GM18951 (cell line): ENCODE measurements at regions of chr2 and their contacts with region 1.

Region 1: DNA sequence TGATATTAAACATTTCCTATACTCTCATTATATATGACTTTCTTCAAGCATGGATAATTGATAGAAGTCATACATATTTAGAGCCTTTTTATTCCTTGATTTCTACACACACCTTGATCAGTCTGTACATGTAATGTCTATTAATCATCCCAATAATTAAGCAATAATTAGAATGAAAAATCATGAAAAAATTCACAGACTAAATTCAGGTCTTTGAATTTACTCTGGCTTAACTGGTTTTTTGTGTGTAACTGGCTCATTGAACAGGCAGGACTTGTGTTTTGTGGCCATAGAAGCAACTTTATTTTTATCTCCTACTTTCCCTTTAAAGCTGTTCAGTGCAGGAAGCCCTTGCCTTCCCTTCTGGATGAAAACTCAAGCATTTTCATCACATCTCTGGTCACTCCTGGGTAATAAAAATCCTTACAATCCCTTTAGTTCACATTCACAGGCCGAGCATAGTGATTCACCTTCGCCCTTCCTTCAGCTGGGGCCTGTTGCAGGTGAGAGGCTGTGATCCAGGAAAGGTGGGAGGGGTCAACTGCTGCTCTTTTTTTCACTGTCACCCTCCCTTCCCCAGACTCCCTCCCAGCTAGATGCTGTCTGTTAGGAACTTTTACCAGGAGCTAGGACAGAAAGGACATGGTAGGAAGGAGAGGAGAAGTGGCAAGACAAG is 58.0 kb upstream of the ITSN2 start:
- POLR2A ChIP-seq: no peak

Region 2: DNA sequence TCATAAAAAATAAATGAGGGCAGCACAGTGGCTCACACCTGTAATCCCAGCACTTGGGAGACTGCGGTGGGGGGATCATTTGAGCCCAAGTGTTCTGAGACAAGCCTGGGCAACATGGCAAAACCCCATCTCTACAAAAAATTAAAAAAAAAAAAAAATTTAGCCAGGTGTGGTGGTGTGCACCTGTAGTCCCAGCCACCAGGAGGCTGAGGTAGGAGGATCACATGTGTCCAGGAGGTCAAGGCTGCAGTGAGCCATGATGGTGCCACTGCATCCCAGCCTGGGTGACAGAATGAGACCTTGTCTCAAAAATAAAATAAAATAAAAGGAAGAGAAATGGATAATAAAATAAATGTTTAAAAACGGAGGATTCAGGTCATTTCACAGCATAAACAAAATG is 604.9 kb before region 1 on chr2:
- in situ Hi-C with region 1: no loop called
- POLR2A ChIP-seq: no peak

Region 3: GRCh38 chr2:24824966-24825882 is 406.9 kb after region 1 on chr2:
- in situ Hi-C with region 1: loop called (anchors 5 kb)
- POLR2A ChIP-seq: no peak